ENCODE measurements at regions of chr17 and their contacts with region 1.

Region 1: GRCh38 chr17:40098846-40099618 is 1.4 kb downstream of the NR1D1 start:
- H3K4me3 ChIP-seq: peak overlapping the region; percentile 23
- H3K27ac ChIP-seq: peak overlapping the region; percentile 26; the same call in 1 of the 2 replicates
- H3K4me1 ChIP-seq: peaks cover 16% of the 10 kb centered on the region
- CTCF ChIP-seq: no peak

Region 2: GRCh38 chr17:40026816-40027613 is 72.0 kb before region 1 on chr17:
- CTCF ChIA-PET with region 1: interaction called, 18 read pairs
- POLR2A ChIA-PET with region 1: no interaction called
- H3K4me3 ChIP-seq: no peak overlapping the region
- H3K27ac ChIP-seq: no peak overlapping the region
- H3K4me1 ChIP-seq: peaks cover 16% of the 10 kb centered on the region
- CTCF ChIP-seq: peak; percentile 82

Region 3: GRCh38 chr17:40062329-40063186 is 36.5 kb before region 1 on chr17 and contains the start of gene THRA:
- CTCF ChIA-PET with region 1: interaction called, 5 read pairs
- POLR2A ChIA-PET with region 1: interaction called, 11 read pairs
- H3K4me3 ChIP-seq: peak within 1 kb of the TSS; percentile 84
- H3K27ac ChIP-seq: peak within 1 kb of the TSS; percentile 86; the same call in 1 of the 2 replicates
- H3K4me1 ChIP-seq: peaks cover 17% of the 10 kb centered on the region
- CTCF ChIP-seq: no peak

Region 4: DNA sequence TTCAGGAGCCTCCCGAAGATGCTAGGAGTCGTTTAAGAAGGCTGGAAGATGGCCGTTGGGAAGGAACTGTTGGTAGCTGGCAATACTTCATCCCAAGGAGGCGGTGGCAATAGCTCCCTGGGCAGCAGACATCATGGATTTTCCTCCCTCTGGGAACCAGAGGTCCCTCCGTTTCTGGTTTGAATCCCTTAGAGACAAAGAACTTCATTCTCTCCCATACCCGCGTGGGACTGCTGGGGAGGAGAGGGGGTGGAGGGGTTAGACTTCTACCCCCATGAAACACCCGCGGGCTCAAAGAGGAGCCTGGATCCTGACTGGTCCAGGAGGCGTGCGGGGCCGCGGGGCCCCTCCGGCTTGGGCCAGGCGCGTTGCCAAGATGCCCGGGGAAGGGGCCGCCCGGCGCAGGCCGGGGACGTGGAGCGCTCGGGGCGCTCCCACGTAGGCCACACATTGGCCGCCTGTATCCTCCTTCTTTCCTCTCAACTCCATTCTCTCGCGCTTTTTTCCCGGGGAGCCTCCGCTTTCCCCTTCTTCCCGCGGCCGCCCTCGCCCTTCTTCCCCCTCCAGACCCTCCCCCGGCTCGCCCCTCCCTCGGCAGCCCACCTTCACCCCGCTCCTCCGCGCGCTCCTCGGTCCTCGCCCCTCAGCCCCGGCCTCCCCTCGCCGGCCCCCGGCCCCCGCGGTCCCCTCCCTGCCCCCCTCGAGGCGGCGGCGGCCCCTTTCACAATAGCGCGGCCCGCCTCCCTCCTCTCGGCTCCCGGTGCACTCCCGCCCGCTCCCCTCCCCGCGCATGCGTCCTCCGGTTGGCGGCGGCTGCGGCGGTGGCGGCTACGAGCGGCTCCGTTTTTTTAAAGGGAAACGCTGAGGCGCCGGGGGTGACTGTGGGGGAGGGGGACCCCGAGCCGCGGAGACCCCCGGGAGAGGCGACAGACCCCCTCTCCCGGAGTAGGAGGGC is 22.4 kb after region 1 on chr17 and contains the start of gene MSL1:
- CTCF ChIA-PET with region 1: no interaction called
- POLR2A ChIA-PET with region 1: interaction called, 117 read pairs
- H3K4me3 ChIP-seq: peak within 1 kb of the TSS; percentile 72
- H3K27ac ChIP-seq: peak within 1 kb of the TSS; percentile 95
- H3K4me1 ChIP-seq: no peaks in the 10 kb centered on the region; the same call in none of the 2 replicates
- CTCF ChIP-seq: no peak

Region 5: DNA sequence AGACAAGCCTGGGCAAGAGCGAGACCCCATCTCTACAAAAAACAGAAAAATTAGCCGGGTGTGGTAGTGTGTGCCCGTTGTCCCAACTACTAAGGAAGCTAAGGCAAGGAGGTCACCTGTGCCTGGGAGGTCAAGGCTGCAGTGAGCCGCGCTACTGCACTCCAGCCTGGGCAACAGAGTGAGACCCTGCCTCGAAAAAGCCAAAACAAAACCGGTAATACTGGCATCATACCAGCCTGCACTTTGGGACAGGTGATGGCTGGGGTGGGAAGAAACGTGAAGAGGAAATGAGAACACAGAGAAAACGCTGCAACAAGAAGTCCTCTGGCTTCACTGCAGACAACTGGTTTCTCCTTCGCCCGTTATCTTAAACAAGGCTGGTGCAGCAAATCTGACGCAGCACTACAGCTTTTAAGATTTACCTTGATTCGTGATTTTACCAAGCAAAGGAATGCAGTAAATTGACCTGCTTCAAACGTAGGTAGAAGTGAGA is 40.6 kb after region 1 on chr17:
- CTCF ChIA-PET with region 1: interaction called, 3 read pairs
- POLR2A ChIA-PET with region 1: interaction called, 12 read pairs
- H3K4me3 ChIP-seq: peak overlapping the region; percentile 37
- H3K27ac ChIP-seq: peak overlapping the region; percentile 85
- H3K4me1 ChIP-seq: peaks cover 8% of the 10 kb centered on the region
- CTCF ChIP-seq: no peak

Region 6: DNA sequence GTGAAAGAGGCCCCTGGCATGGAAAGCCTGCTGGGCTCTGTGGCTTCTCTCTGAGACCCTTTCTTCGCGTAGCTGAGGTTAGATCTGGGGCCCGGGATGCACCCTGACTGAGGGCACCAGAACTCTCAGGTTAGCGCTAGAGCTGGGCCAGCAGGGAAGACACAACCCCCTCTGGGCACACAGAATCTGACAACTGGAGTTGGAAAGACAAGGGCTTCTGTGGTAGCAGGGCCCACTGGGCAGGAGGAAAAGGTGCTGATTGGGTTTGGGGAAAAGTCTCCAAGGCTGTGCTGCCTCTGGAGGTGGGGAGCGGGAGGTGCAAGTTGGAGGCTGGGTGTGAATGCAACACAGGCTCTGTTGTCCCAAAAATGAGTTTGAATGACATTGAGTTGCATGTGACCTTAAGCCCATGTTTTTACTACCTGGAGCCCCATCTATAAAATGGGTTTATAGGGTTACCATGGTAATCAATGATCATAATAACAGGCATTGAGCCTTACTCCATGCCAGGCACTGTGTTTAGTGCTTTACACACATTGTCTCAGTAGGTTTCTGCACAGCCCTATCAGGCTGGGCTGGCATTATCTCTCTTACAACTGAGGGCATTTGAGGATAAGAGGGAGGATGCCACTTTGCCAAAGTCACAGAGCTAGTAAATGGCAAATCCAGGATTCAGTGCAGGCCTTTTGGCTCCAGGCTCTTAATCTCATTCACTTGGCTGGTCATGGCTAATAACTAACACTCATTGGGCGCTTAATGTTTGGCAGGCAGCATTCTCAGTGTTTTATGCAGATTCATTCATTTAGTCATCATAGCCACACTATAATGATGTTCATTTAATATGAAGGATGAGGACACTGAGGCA is 334.8 kb after region 1 on chr17:
- CTCF ChIA-PET with region 1: no interaction called
- POLR2A ChIA-PET with region 1: no interaction called
- H3K4me3 ChIP-seq: no peak overlapping the region
- H3K27ac ChIP-seq: no peak overlapping the region
- H3K4me1 ChIP-seq: no peaks in the 10 kb centered on the region
- CTCF ChIP-seq: peak; percentile 43; the same call in 1 of the 2 replicates

Measured in HEK293 (cell line).